Right cardiac atrium (tissue), 5 donors: ENCODE measurements at regions of chr20 and their contacts with region 1.

Region 1: DNA sequence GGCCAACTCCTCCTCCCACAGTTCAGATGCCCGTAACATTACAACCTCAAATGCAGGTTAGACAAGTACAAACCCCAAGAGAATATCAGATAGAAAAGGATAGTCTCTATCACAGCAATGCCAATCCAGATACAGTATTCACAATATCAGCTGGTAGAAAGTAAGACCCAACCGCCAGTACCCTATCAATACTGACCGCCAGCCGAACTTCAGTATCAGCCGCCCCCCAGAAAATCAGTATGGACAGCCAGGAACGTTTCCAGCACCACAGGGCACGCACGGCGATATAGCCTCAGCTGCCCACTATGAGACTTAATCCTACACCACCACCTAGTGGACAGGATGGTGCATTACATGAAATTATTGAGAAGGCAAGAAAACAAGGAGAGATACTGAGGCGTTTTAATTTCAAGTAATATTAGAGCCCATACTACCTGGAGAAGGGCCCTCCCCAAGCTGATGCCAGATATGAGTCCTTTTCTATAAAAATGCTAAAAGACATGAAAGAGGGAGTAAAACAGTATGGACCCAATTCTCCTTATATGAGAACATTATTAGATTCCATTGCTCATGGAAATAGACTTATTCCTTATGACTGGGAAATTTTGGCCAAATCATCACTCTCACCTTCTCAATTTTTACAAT is 17.6 kb upstream of the EIF2S2 start:
- DNase-seq: peak; percentile 52 to 78 (median 73)
- ATAC-seq: peak; percentile 82 to 91
- H3K4me3 ChIP-seq: no peak overlapping the region
- H3K27ac ChIP-seq: no peak overlapping the region
- H3K4me1 ChIP-seq: no peaks in the 10 kb centered on the region
- H3K27me3 ChIP-seq: no peaks in the 10 kb centered on the region

Region 2: GRCh38 chr20:33862709-33863403 is 266.8 kb before region 1 on chr20:
- intact Hi-C with region 1: loop called in 3 of 4 experiments (anchors 5 to 10 kb)
- DNase-seq: peak; percentile 70 to 88 (median 82)
- ATAC-seq: peak; percentile 84 to 88
- H3K4me3 ChIP-seq: no peak overlapping the region
- H3K27ac ChIP-seq: no peak overlapping the region
- H3K4me1 ChIP-seq: no peaks in the 10 kb centered on the region
- H3K27me3 ChIP-seq: no peaks in the 10 kb centered on the region

Region 3: GRCh38 chr20:33933469-33933909 is 196.2 kb before region 1 on chr20:
- intact Hi-C with region 1: loop called in 1 of 4 experiments (anchors 10 kb)
- DNase-seq: peak; percentile 62 to 87 (median 82)
- ATAC-seq: peak; percentile 93 to 95
- H3K4me3 ChIP-seq: no peak overlapping the region
- H3K27ac ChIP-seq: no peak overlapping the region
- H3K4me1 ChIP-seq: no peaks in the 10 kb centered on the region
- H3K27me3 ChIP-seq: no peaks in the 10 kb centered on the region